ENCODE measurements at regions of chr20 and their contacts with region 1.

Region 1: GRCh38 chr20:20083807-20084206 is 31.5 kb downstream of the CFAP61 start:
- DNase-seq: no peak
- H3K4me3 ChIP-seq: no peak overlapping the region
- H3K27ac ChIP-seq: no peak overlapping the region
- H3K4me1 ChIP-seq: peaks cover 0 to 9% (median 4%) of the 10 kb centered on the region in 4 donors
- H3K27me3 ChIP-seq: no peaks in the 10 kb centered on the region
- CTCF ChIP-seq: peak; percentile 39 to 44 (median 44)
- EP300 ChIP-seq: no peak
- POLR2A ChIP-seq: no peak

Region 2: GRCh38 chr20:19903168-19903811 is 180.5 kb before region 1 on chr20:
- intact Hi-C with region 1: no loop called
- DNase-seq: no peak
- H3K4me3 ChIP-seq: no peak overlapping the region
- H3K27ac ChIP-seq: peak overlapping the region in 1 of 4 donors; percentile 8
- H3K4me1 ChIP-seq: peaks cover 20 to 34% (median 28%) of the 10 kb centered on the region in 4 donors
- H3K27me3 ChIP-seq: no peaks in the 10 kb centered on the region
- CTCF ChIP-seq: peak in 2 of 3 experiments; percentile 24
- EP300 ChIP-seq: no peak
- POLR2A ChIP-seq: no peak

Region 3: DNA sequence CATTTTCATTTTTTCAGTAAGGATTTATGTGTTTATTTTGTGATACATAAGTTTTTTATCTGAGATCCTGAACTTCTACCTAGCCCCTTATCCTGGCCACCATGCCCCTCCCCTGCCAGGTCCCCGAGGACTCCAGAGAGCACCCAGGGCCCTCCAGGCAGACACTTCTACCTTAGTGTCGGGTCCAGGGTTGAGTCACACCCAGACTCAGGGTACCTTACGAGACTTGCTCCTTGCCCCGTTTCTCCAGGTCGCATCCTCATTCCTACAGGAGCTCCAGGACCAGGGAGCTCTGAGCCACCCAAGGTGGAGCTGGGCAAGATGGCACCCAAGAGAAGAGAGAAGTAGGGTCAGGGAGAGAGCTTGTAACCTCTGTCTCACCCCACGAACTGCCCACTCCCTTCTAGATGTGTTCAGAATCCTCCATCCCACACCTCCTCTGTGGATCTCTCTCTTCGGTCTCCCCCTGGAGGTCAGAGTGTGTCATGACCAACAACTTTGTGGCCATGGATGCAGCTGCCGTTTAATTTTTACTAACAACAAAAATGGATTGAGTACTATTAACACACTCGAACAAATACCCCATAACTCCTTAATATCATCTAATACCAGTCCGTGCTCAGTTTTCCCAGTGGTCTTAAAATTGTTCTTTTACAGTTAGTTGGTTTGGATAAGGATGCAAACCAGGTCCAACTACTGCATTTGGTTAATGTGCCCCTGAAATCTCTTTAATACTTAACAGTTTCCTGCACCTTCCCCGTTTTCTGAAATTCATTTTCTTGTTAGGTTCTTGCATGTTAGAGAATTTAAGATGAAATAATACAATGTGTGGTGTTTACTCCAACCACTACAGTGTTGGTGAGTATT is 153.5 kb after region 1 on chr20:
- intact Hi-C with region 1: loop called (anchors 2 kb)
- DNase-seq: peak; percentile 91
- H3K4me3 ChIP-seq: no peak overlapping the region
- H3K27ac ChIP-seq: no peak overlapping the region
- H3K4me1 ChIP-seq: peaks cover 0 to 2% (median 0%) of the 10 kb centered on the region in 4 donors
- H3K27me3 ChIP-seq: no peaks in the 10 kb centered on the region
- CTCF ChIP-seq: peak; percentile 39 to 56 (median 49)
- EP300 ChIP-seq: no peak
- POLR2A ChIP-seq: no peak

Region 4: DNA sequence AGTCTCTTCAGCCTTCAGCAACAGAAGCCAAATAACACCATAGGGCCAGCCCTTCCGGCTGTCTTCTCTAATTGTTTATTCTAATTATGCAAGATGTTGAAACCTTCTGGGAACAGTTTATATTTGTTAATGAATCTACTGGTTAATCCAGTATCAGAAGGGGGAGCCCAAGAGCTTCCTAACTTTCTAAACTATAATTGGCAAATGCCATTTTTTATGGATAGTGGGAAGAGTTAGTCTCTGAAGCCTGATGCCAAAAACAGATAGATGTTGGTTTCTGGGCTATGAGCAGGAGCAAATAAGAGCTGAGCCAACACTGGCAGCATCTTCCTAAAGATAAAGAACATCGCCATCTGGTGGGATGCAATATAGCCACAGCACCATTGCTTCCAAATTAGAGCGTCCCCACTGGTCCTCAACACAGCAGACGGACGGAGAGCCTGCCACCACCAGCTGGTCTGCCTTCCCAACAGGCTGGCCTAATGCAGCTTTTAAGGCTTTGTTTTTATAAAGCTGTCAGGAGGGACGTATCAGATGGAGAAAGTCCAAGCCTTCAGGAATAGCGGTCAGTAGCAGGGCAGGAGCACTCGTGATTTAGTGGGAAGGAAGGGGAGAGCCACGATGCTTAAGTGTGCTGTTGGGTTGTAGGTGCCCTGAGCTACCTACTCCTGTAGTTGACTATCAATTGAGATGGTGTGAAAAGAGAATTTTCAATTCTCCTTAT is 509.8 kb after region 1 on chr20:
- intact Hi-C with region 1: loop called (anchors 5 kb)
- DNase-seq: no peak
- H3K4me3 ChIP-seq: no peak overlapping the region
- H3K27ac ChIP-seq: peak overlapping the region in 3 of 4 donors; percentile 25 to 60 (median 41)
- H3K4me1 ChIP-seq: peaks cover 0 to 17% (median 15%) of the 10 kb centered on the region in 4 donors
- H3K27me3 ChIP-seq: no peaks in the 10 kb centered on the region
- CTCF ChIP-seq: peak in 2 of 3 experiments; percentile 15 to 48
- EP300 ChIP-seq: no peak
- POLR2A ChIP-seq: no peak